Natural killer cell (primary cell): ENCODE measurements at regions of chr7 and their contacts with region 1.

Region 1: DNA sequence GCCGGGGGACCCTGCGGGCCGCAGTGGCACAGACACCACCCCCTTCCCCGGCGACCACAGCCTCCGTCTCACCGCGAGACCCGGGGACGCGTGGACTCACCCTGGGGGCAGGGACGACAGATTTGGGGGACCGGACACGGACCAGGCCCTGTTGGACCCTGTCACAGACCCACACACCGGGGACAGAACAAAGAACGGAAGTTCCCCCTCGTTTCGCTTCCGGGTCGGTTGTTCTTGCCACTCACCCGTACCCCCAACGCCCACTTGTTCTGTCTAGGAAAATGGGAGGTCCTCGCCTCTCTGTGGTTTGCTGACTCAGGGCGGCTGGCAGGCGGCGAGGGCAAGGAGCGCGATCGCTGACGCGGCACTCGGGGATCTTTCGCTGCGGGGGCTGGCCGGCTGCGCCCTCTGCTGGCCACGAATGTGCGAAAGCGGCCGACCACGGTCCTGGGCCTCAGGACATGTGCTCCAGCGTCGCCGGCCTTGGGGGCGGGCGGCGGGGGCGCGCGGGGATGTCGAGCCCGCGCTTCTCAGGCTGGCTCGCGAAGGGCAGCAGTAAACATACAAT is at the start of gene ZNF3:
- DNase-seq: peak; percentile 98 to 99
- ATAC-seq: peak; percentile 80 to 93 (median 82)
- H3K4me3 ChIP-seq: peak within 1 kb of the TSS; percentile 71
- H3K4me3 Mint-ChIP-seq: peak within 1 kb of the TSS; percentile 90
- H3K27ac ChIP-seq: peak within 1 kb of the TSS; percentile 90
- H3K27ac Mint-ChIP-seq: peak within 1 kb of the TSS; percentile 77 to 83
- H3K4me1 ChIP-seq: peaks cover 24% of the 10 kb centered on the region
- H3K4me1 Mint-ChIP-seq: peaks cover 20 to 34% of the 10 kb centered on the region in 2 donors
- H3K27me3 ChIP-seq: no peaks in the 10 kb centered on the region
- H3K27me3 Mint-ChIP-seq: no peaks in the 10 kb centered on the region
- CTCF ChIP-seq: peak; percentile 96
- total RNA-seq, gene ZNF3: 37.8 to 51.6 (median 49.0) TPM

Region 2: GRCh38 chr7:99997545-99998137 is 84.0 kb before region 1 on chr7:
- intact Hi-C with region 1: loop called (anchors 1 kb)
- DNase-seq: peak; percentile 80 to 87
- ATAC-seq: peak; percentile 91 to 98 (median 97)
- H3K4me3 ChIP-seq: peak overlapping the region; percentile 39
- H3K4me3 Mint-ChIP-seq: peak overlapping the region; percentile 85
- H3K27ac ChIP-seq: peak overlapping the region; percentile 91
- H3K27ac Mint-ChIP-seq: peak overlapping the region; percentile 96 to 98
- H3K4me1 ChIP-seq: peaks cover 15% of the 10 kb centered on the region
- H3K4me1 Mint-ChIP-seq: peaks cover 15 to 17% of the 10 kb centered on the region in 2 donors
- H3K27me3 ChIP-seq: no peaks in the 10 kb centered on the region
- H3K27me3 Mint-ChIP-seq: peaks cover 0 to 6% of the 10 kb centered on the region in 2 donors
- CTCF ChIP-seq: peak; percentile 28

Region 3: GRCh38 chr7:100015232-100016209 is 66.1 kb before region 1 on chr7 and contains the start of gene ZKSCAN1:
- intact Hi-C with region 1: loop called (anchors 1 kb)
- DNase-seq: peak; percentile 77 to 95
- ATAC-seq: peak; percentile 95 to 99 (median 99)
- H3K4me3 ChIP-seq: peak within 1 kb of the TSS; percentile 98
- H3K4me3 Mint-ChIP-seq: peak within 1 kb of the TSS; percentile 92
- H3K27ac ChIP-seq: peak within 1 kb of the TSS; percentile 93
- H3K27ac Mint-ChIP-seq: peak within 1 kb of the TSS; percentile 91 to 95
- H3K4me1 ChIP-seq: peaks cover 19% of the 10 kb centered on the region
- H3K4me1 Mint-ChIP-seq: peaks cover 24 to 27% of the 10 kb centered on the region in 2 donors
- H3K27me3 ChIP-seq: no peaks in the 10 kb centered on the region
- H3K27me3 Mint-ChIP-seq: peaks cover 5 to 6% of the 10 kb centered on the region in 2 donors
- CTCF ChIP-seq: no peak
- total RNA-seq, gene ZKSCAN1: 57.6 to 62.5 (median 60.8) TPM

Region 4: GRCh38 chr7:100049441-100050311 is 31.9 kb before region 1 on chr7 and contains the start of gene ZSCAN21:
- intact Hi-C with region 1: loop called (anchors 5 kb)
- DNase-seq: peak; percentile 86 to 89
- ATAC-seq: peak; percentile 89 to 93 (median 90)
- H3K4me3 ChIP-seq: peak within 1 kb of the TSS; percentile 84
- H3K4me3 Mint-ChIP-seq: peak within 1 kb of the TSS; percentile 91
- H3K27ac ChIP-seq: peak within 1 kb of the TSS; percentile 82
- H3K27ac Mint-ChIP-seq: peak within 1 kb of the TSS; percentile 89 to 92
- H3K4me1 ChIP-seq: peaks cover 17% of the 10 kb centered on the region
- H3K4me1 Mint-ChIP-seq: peaks cover 13 to 18% of the 10 kb centered on the region in 2 donors
- H3K27me3 ChIP-seq: no peaks in the 10 kb centered on the region
- H3K27me3 Mint-ChIP-seq: no peaks in the 10 kb centered on the region
- CTCF ChIP-seq: peak; percentile 12
- total RNA-seq, gene ZSCAN21: 6.2 to 8.9 (median 7.2) TPM

Region 5: DNA sequence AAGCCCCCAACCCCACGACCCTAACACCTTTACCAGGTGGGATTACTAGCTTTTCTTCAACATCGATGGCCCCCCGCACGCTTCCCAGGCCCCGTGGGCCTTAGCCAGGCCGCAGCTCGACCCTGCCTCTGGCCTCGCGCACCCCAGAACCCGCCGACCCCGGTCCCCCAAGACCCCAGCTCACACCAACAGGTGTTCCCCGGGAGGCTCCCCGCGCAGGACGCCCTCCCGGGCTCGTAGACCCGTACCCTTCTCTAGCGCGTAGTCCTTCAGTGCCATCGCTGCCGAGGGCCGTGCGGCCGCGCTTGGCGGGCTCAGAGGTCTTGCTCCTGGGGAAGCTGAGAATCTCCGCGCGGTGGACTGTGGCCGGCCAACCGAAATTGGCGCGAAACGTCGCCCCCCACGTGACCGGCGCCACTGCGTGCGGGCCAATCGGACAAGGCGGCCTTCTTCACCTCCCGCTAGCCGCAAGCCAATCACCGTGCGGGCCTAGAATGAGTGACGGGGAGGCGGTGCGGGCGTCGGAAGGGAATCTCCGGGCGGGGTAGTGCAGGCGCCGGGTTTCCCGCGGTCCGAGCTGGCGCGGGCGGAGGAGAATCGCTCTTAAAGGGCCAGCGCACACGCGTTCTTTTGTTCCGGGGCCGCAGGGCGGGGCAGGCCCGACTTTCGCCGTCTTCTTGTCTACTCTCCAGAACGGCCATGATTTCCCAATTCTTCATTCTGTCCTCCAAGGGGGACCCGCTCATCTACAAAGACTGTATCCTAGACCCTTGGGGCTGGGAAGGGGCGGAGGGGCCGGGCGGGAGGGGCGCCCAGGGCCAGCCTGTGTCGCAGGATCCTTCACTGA is 19.6 kb after region 1 on chr7 and contains the starts of genes AP4M1 and MCM7:
- intact Hi-C with region 1: loop called (anchors 1 kb)
- DNase-seq: peak; percentile 97
- ATAC-seq: peak; percentile 79 to 93 (median 81)
- H3K4me3 ChIP-seq: peak within 1 kb of the TSS; percentile 98
- H3K4me3 Mint-ChIP-seq: peak within 1 kb of the TSS; percentile 95
- H3K27ac ChIP-seq: peak within 1 kb of the TSS; percentile 93
- H3K27ac Mint-ChIP-seq: peak within 1 kb of the TSS; percentile 96 to 98
- H3K4me1 ChIP-seq: peaks cover 28% of the 10 kb centered on the region
- H3K4me1 Mint-ChIP-seq: peaks cover 36 to 43% of the 10 kb centered on the region in 2 donors
- H3K27me3 ChIP-seq: no peaks in the 10 kb centered on the region
- H3K27me3 Mint-ChIP-seq: no peaks in the 10 kb centered on the region
- CTCF ChIP-seq: no peak
- total RNA-seq, gene AP4M1: 8.4 to 12.8 (median 12.7) TPM
- total RNA-seq, gene MCM7: 112 to 214 (median 137) TPM

Region 6: GRCh38 chr7:100119062-100119700 is 37.6 kb after region 1 on chr7 and contains the starts of genes CNPY4 and TAF6:
- intact Hi-C with region 1: loop called (anchors 5 kb)
- DNase-seq: peak; percentile 90 to 98
- ATAC-seq: peak; percentile 80 to 90 (median 86)
- H3K4me3 ChIP-seq: peak within 1 kb of the TSS; percentile 73
- H3K4me3 Mint-ChIP-seq: peak within 1 kb of the TSS; percentile 97
- H3K27ac ChIP-seq: peak within 1 kb of the TSS; percentile 89
- H3K27ac Mint-ChIP-seq: peak within 1 kb of the TSS; percentile 98
- H3K4me1 ChIP-seq: peaks cover 22% of the 10 kb centered on the region
- H3K4me1 Mint-ChIP-seq: peaks cover 23 to 25% of the 10 kb centered on the region in 2 donors
- H3K27me3 ChIP-seq: no peaks in the 10 kb centered on the region
- H3K27me3 Mint-ChIP-seq: no peaks in the 10 kb centered on the region
- CTCF ChIP-seq: no peak
- total RNA-seq, gene CNPY4: 19.1 to 25.8 (median 23.9) TPM
- total RNA-seq, gene TAF6: 42.2 to 56.8 (median 47.9) TPM

Region 7: GRCh38 chr7:100221231-100221718 is 139.7 kb after region 1 on chr7:
- intact Hi-C with region 1: loop called (anchors 1 kb)
- DNase-seq: peak; percentile 53 to 92
- ATAC-seq: peak; percentile 50 to 66 (median 63)
- H3K4me3 ChIP-seq: peak overlapping the region; percentile 98
- H3K4me3 Mint-ChIP-seq: peak overlapping the region; percentile 95
- H3K27ac ChIP-seq: peak overlapping the region; percentile 98
- H3K27ac Mint-ChIP-seq: peak overlapping the region; percentile 98 to 99
- H3K4me1 ChIP-seq: peaks cover 81% of the 10 kb centered on the region
- H3K4me1 Mint-ChIP-seq: peaks cover 54 to 85% of the 10 kb centered on the region in 2 donors
- H3K27me3 ChIP-seq: no peaks in the 10 kb centered on the region
- H3K27me3 Mint-ChIP-seq: no peaks in the 10 kb centered on the region
- CTCF ChIP-seq: no peak